ENCODE measurements at regions of chr3 and their contacts with region 1.

Region 1: DNA sequence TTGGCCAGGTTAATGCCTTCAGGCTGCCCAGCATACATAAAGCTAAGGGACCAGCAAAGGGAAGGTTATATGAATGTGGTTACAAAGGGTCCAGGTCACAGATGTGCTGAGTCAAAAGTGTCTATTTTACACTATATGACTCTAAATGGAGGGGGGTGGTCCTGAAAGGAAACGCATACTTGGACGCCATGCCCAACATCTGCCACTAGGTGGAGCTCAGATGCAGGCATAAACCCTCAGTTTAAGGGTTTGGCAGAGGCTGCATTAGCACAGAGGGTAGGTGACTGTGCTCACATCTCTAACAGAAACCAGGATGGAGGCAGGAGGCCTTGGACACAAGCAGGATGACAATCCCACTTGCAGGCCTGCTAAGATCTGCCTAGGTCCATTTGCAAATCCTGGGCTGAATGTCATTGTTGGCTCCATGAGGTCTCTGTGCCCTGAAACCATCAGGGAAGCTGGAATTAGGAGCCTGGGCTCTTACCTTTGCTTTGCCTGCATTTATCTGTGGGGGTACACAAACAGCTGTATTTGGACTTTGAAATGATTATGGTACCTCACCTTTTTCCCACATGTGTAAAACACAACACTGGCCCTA is 55.8 kb downstream of the ZNF621 start:
- DNase-seq: peak; percentile 30 to 88 (median 74)

Region 2: GRCh38 chr3:40847551-40847992 is 267.0 kb after region 1 on chr3:
- intact Hi-C with region 1: no loop called
- DNase-seq: peak in 1 of 42 donors; percentile 13

Region 3: GRCh38 chr3:41198950-41199865 is 618.6 kb after region 1 on chr3 and contains the start of gene CTNNB1:
- intact Hi-C with region 1: loop called (anchors 10 kb)
- DNase-seq: peak; percentile 83 to 97 (median 92)

Region 4: DNA sequence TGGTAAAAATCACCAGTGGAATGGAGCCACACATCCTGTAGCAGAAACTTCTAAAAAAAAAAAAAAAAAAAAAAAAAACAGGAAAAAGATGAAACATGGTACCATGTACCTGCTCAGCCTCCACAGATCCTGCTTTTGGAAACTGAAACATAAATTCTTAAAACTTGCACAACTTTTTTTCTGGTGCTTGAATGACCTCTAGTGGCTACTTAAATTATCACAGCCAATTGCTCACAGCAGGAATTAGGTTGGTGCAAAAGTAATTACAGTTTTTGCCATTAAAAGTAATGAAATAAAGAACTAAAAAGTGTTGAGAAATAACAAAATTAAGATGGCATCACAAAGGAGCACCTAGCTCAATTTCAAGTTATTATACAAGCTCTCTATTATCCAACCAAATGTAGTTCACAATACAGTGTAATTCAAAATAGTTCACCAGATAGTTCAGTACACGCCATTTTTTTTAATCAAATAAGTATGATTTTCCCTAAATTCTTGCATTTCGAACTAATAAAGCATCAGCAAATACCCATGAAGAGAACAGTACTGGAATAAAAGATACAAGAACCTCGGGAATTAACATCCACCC is 1300.7 kb after region 1 on chr3:
- intact Hi-C with region 1: loop called (anchors 2 kb)
- DNase-seq: peak in 5 of 42 donors; percentile 9 to 57 (median 21)

Measured in head of caudate nucleus (tissue), 42 donors.